ENCODE measurements at regions of chr21 and their contacts with region 1.

Region 1: DNA sequence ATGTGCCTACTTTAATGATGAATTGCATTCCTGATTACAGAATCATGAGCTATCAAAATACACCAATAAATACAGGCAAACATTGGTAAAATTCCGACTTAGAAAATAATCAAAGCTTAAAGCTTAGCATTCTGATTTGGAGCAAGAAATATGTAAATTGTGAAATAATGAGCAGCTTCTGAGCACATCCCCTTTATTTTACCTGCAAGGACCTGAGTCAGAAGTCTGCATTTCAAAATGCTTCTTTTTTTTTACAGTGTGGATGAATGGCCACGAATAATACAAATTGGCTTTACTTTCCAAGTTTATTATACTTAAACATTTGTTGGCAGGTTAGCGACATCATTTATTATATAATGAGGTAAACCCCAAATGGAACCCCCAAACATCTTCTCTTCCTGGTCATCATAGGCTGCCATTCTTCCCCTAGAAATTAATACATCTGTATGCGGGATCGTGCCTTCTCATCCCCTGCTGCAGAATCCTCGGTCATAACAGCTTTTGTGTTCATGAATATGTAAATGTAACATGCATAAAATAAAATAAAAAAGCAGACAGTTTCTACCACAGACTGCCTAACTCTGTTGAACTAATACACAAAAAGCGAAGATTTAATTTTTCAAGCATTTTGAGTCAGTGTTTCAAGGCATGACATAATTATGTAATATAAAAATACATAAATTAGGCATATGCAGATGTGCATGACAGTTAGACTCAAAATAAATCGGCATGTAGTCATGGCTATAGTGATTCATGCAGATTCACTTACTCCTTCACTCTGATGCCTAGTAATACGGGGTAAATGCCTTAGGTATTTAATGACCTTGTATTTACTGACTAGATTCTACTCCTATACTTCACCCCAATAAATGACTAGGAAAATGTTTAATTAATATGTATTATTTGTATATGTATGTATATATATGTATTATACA is 339.7 kb downstream of the USP25 start:
- H3K4me3 Mint-ChIP-seq: no peak overlapping the region
- H3K27ac Mint-ChIP-seq: no peak overlapping the region
- H3K4me1 Mint-ChIP-seq: no peaks in the 10 kb centered on the region
- H3K27me3 Mint-ChIP-seq: no peaks in the 10 kb centered on the region

Region 2: GRCh38 chr21:14712121-14712723 is 1357.2 kb before region 1 on chr21:
- intact Hi-C with region 1: loop called (anchors 10 kb)
- H3K4me3 Mint-ChIP-seq: no peak overlapping the region
- H3K27ac Mint-ChIP-seq: no peak overlapping the region
- H3K4me1 Mint-ChIP-seq: peaks cover 6% of the 10 kb centered on the region
- H3K27me3 Mint-ChIP-seq: no peaks in the 10 kb centered on the region

Measured in dendritic cell treated with granulocyte-macrophage colony-stimulating factor and Interleukin-4, amounts not matched to agents 40 ng/mL and 50 ng/mL, for 4 days (primary cell).